ENCODE measurements at regions of chrX and their contacts with region 1.

Region 1: GRCh38 chrX:119729408-119730201 is 28.8 kb upstream of the SOWAHD start:
- DNase-seq: peak; percentile 45 to 77 (median 53)
- ATAC-seq: peak in 1 of 2 donors; percentile 54
- H3K4me3 ChIP-seq: no peak overlapping the region
- H3K27ac ChIP-seq: no peak overlapping the region
- H3K4me1 ChIP-seq: no peaks in the 10 kb centered on the region
- H3K27me3 ChIP-seq: no peaks in the 10 kb centered on the region

Region 2: DNA sequence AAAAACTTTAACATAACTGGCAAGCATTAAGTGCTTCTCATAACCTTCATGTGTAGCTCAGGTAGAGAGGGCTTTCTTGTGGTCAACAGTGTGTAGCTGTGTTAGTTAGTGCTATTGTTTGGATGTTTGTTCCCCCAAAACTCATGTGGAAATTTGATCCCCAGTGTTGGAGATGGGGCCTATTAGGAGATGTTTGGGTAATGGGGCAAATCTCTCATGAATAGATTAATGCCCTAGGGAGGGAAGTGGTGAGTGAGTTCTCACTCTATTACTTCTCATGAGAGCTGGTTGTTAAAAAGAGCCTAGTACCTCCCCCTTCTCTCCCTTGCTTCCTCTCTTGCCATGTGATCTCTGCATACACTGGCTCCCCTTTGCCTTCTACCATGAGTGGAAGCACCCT is 347.0 kb before region 1 on chrX:
- intact Hi-C with region 1: no loop called
- DNase-seq: no peak
- ATAC-seq: no peak
- H3K4me3 ChIP-seq: no peak overlapping the region
- H3K27ac ChIP-seq: no peak overlapping the region
- H3K4me1 ChIP-seq: no peaks in the 10 kb centered on the region
- H3K27me3 ChIP-seq: no peaks in the 10 kb centered on the region

Region 3: DNA sequence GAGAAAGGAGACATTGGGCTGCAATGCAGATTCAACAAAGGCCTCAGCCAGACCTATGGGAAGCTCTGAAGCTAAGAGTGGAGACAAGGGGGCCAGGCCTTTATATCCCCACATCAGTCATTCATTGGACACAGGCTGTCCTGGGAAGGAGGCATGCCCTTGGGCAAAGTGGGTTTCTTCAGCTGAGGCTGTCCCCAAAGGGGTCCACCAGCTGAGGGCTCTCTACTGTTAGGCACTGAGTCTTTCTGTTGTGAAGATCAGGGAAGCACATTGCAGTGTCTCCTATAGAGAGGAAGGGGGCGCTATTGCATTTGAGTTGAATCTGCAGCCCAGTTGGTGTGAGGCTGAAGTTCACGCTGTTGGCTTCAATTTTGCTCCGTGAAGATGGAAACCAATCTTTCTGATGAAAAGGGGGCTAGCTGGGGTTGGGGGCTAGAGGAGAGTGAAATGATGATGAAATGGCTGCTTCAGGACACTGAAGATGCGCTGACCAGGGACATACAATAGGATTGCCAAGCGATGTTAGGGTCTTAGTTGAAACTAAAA is 213.4 kb before region 1 on chrX:
- intact Hi-C with region 1: loop called in 2 of 4 experiments (anchors 10 kb)
- DNase-seq: peak in 1 of 3 donors; percentile 37
- ATAC-seq: peak; percentile 71 to 72
- H3K4me3 ChIP-seq: no peak overlapping the region
- H3K27ac ChIP-seq: no peak overlapping the region
- H3K4me1 ChIP-seq: no peaks in the 10 kb centered on the region
- H3K27me3 ChIP-seq: no peaks in the 10 kb centered on the region

Region 4: DNA sequence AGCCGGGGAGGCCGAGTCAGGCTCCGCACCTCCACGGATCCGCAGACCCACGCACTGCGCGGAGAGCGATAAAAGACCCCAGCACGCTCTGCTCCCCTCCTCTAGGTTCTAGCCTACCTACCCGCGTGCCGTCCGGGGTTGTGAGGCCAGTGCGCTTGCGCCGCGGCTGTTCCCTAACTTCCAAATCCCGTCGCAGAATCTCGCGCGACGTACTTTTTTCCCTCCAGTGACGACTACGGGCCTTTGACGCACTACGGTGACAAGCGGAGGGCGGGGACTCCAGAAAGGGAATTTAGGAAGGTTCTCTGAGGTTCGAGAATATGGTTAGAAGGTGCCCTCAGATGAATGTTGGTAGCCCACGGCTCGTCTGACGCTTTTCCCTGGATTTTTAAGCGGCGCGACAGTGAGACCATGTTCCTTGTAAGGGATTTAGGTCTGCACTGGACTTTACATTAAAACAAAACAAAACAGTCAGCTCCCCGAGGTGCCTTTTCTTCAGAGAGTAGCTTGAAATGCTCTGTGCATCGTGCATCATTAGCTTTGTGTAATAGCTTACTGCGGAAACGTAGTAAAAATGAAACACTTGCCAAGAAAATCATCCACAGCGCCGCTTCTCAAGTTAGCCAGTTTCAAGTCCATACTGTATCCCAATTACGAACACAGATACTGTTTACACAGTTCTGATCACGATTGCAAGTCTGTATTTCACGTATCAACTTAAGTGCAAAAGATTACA is 123.2 kb before region 1 on chrX and contains the start of gene NKRF:
- intact Hi-C with region 1: loop called in 1 of 4 experiments (anchors 10 kb)
- DNase-seq: peak; percentile 94 to 98 (median 96)
- ATAC-seq: peak; percentile 94 to 96
- H3K4me3 ChIP-seq: peak within 1 kb of the TSS; percentile 58
- H3K27ac ChIP-seq: peak within 1 kb of the TSS; percentile 78
- H3K4me1 ChIP-seq: no peaks in the 10 kb centered on the region
- H3K27me3 ChIP-seq: no peaks in the 10 kb centered on the region
- total RNA-seq, gene NKRF: 4.4 to 5.2 (median 4.8) TPM